ENCODE measurements at regions of chr17 and their contacts with region 1.

Region 1: DNA sequence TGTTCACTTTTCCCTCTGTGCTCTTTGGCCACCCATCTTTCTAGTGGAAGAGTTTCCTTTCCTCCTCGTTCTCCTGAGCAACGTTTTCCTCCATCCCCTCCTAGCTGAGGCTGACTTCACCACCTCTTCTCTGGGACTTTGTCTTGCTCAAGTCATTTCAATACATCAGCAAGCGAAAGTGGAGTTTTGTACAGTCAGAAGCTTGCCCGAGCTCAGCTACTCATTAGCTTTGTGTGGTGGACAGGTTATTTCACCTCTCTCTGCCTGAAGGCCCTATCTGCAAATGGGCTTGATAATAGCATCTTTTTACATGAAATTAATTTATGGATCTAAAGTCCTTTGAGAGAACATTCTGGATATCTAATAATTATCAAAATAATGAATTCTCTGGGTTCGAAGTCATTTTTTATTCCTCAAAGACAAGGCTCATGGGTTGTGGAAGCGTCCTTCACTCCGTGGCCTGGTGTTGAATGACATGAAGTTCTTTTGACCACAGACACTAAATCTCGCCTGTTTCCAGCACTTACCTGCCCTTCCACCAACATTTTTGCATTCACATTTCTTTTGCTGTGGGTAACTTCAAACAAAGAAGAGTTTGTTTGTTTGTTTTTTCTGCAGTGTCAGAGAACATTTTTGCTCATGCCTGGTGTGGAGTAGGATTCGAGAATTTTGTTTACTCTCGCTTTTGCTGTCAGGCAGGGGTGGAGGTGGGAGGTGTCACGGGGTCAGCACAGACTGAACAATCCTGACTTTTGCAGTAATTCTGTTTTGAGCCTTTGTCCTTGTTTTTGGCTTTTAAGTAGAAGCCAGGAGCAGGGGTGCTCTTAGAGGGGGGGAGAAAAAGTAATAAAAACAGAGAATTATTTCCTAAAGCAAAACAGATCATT is 155.0 kb upstream of the CACNG5 start:
- DNase-seq: no peak
- H3K4me3 ChIP-seq: no peak overlapping the region
- H3K27ac ChIP-seq: no peak overlapping the region
- H3K4me1 ChIP-seq: no peaks in the 10 kb centered on the region
- H3K27me3 ChIP-seq: no peaks in the 10 kb centered on the region
- CTCF ChIP-seq: no peak

Region 2: GRCh38 chr17:66691644-66692420 is 12.0 kb after region 1 on chr17:
- CTCF ChIA-PET with region 1: interaction called, 14 read pairs
- POLR2A ChIA-PET with region 1: no interaction called
- intact Hi-C with region 1: no loop called
- DNase-seq: no peak
- H3K4me3 ChIP-seq: no peak overlapping the region
- H3K27ac ChIP-seq: no peak overlapping the region
- H3K4me1 ChIP-seq: no peaks in the 10 kb centered on the region
- H3K27me3 ChIP-seq: no peaks in the 10 kb centered on the region
- CTCF ChIP-seq: no peak

Measured in A673 (cell line).